BJ (cell line): ENCODE measurements at regions of chr1 and their contacts with region 1.

Region 1: GRCh38 chr1:156838981-156839410 is 19.9 kb downstream of the INSRR start:
- DNase-seq: no peak
- H3K4me3 ChIP-seq: no peak overlapping the region
- H3K27me3 ChIP-seq: peaks cover 30% of the 10 kb centered on the region
- CTCF ChIP-seq: peak; percentile 92

Region 2: DNA sequence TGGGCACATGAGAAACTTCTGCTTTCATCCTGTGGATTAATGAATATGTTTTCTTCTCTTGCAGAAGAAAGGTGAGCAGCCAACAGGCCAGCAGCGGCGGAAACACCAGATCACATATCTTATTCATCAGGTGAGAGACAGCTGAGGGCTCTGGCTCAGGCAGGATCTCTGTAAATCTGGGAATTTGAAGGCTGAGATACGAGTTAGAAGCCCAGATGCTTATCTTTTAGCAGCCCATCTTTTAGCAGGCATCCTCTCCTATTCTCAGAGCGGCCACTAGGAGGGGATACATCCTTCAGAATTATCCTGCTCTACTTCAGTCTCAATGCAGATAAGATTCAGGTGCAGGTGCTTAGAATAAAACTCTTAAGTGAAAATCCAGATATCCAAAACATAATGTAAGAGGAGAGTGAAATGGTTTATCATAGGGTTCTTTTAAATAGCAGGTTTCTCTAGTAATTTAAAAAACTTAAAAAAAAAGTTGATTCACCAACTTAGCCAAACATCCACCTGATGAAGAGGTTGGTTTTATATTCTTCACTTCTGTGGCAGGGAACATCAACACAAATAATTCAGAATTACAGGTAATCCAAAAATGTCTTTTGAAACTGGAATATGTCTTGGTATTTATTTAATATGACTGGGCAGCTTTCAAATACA is 41.7 kb before region 1 on chr1:
- CTCF ChIA-PET with region 1: interaction called, 71 read pairs
- POLR2A ChIA-PET with region 1: no interaction called
- DNase-seq: no peak
- H3K4me3 ChIP-seq: no peak overlapping the region
- H3K27me3 ChIP-seq: no peaks in the 10 kb centered on the region
- CTCF ChIP-seq: peak; percentile 85

Region 3: DNA sequence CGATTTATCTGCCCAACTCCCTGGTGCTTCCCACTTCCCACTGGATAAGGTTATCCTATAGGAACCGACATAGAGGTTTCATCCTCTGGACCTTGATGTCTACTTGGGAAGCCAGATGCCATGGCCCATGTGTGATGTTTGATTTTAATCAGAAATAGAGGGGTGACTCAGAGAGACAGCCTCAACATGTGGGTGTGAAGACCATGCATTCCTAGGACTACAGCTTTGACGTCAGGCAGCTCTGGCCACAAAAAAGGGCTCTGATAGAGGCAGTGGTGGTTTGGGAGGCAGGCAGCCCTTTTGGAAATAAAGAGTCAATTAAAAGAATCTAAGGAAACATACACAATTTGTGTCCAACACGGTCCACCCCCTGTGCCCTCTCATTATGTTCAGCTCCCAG is 17.2 kb before region 1 on chr1:
- CTCF ChIA-PET with region 1: interaction called, 101 read pairs
- POLR2A ChIA-PET with region 1: no interaction called
- DNase-seq: no peak
- H3K4me3 ChIP-seq: no peak overlapping the region
- H3K27me3 ChIP-seq: peaks cover 5% of the 10 kb centered on the region
- CTCF ChIP-seq: no peak

Region 4: GRCh38 chr1:156884560-156885184 is 45.7 kb after region 1 on chr1:
- CTCF ChIA-PET with region 1: interaction called, 39 read pairs
- POLR2A ChIA-PET with region 1: no interaction called
- DNase-seq: no peak
- H3K4me3 ChIP-seq: no peak overlapping the region
- H3K27me3 ChIP-seq: peaks cover 34% of the 10 kb centered on the region
- CTCF ChIP-seq: no peak

Region 5: DNA sequence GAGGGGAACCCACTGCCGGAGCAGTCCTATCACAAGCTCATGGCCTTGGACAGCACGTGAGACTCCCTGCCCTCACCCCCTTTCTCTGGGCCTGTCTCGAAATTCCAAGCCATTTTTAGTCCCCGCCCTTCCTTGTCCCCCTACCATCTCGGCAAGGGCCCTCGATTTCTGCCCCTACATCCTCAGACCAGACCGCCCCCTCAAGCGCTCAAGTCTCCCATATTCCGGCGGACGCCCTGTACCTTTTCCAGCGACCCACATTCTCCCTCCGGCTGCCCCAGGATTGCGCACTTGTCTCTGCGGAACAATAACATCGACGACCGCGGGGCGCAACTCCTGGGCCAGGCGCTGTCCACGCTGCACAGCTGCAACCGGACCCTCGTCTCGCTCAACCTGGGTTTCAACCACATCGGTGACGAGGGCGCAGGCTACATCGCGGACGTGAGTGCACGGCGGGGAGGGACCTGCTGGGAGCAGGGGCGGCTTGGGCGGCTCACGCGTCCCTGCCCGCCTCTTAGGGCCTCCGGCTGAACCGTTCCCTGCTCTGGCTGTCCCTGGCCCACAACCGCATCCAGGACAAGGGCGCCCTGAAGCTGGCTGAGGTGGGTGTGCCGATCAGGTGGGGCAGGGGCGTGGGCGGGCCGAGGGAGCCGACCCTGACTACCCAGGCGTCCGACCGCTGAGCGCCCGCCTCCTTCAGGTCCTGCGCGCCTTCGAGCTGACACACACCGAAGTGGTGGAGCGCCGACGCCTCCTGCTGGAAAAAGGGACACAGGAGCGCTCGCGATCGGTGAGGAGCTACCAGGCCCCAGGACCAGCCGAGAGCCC is 88.4 kb after region 1 on chr1:
- CTCF ChIA-PET with region 1: interaction called, 23 read pairs
- POLR2A ChIA-PET with region 1: no interaction called
- DNase-seq: no peak
- H3K4me3 ChIP-seq: peak overlapping the region; percentile 32
- H3K27me3 ChIP-seq: peaks cover 12% of the 10 kb centered on the region
- CTCF ChIP-seq: peak; percentile 89